ENCODE measurements at regions of chr7 and their contacts with region 1.

Region 1: DNA sequence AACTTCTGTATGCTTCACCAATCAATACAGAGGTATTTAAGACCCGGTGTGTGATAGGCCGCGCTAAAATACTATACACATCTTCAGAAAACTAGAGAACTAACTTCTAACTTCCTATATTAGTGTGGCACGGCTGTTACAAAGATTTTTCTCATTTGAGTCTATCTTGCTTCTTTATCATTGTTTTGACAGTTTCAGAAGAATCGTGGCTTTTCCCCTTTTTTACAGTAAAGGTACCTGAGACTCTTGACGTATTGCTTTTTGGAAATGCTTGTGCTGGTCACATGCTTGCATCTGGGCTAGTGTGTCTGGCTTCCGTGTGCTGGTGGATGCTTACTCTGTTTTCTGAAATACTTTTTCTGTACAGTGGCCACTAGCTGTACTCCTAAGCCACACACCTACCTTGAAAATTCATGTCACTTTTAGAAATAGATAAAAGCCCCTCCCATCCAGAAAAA is 12.7 kb downstream of the IKZF1 start:
- DNase-seq: peak; percentile 77
- H3K4me3 Mint-ChIP-seq: peak overlapping the region; percentile 71
- H3K27ac Mint-ChIP-seq: peak overlapping the region; percentile 99
- H3K4me1 Mint-ChIP-seq: peaks cover 90% of the 10 kb centered on the region
- H3K27me3 Mint-ChIP-seq: no peaks in the 10 kb centered on the region

Region 2: DNA sequence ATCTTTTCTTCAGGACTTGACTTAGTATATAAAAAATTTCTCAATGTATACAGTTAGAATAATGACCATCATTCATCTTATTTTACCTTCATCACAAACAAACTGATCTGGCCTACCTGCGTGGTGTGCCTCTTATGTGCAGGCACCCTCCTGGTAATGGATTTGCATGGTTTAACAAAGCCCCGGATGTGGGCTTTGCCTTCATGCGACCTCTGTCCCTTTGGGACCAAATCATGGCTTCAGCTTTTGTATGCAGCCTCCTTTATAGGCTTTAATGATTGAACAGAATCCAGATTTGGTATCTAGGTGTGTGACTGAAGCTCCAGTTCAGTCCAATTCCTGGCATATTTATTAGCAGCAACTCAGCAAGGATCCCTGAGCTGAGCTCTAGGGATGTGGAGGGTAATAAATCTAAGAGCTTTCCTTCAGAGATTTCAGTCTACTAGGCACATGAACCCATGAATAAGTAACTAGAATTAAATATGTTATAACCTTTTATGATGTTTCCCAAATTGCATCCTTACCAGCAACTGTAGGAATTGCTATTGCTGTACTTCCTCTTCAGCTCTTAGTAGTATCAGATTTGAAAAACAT is 1889.1 kb before region 1 on chr7:
- CTCF ChIA-PET with region 1: no interaction called
- intact Hi-C with region 1: no loop called
- DNase-seq: no peak
- H3K4me3 Mint-ChIP-seq: no peak overlapping the region
- H3K27ac Mint-ChIP-seq: no peak overlapping the region
- H3K4me1 Mint-ChIP-seq: no peaks in the 10 kb centered on the region
- H3K27me3 Mint-ChIP-seq: no peaks in the 10 kb centered on the region

Region 3: GRCh38 chr7:50147951-50148808 is 169.1 kb before region 1 on chr7:
- CTCF ChIA-PET with region 1: interaction called, 5 read pairs
- intact Hi-C with region 1: loop called (anchors 1 kb)
- DNase-seq: peak; percentile 73
- H3K4me3 Mint-ChIP-seq: peak overlapping the region; percentile 34
- H3K27ac Mint-ChIP-seq: peak overlapping the region; percentile 91
- H3K4me1 Mint-ChIP-seq: peaks cover 91% of the 10 kb centered on the region
- H3K27me3 Mint-ChIP-seq: no peaks in the 10 kb centered on the region

Region 4: DNA sequence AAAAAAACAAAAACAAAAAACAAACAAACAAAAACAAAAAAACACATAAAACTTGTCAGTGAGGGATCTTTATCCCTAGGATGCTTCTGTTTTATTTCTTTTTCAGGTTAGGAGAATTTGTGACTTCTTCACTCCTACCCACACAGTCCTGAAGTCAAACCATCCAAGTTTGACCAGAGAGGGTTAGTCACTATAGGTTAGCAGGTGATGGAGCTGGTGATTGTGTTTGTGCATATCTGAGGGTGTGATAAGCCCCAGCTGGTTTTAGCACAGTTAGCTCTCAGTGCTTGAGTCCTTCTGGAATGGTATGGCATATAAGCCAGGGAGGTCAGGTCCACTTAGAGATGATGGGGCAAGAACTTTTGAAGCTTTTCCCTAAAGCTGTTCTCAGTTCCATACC is 24.5 kb before region 1 on chr7:
- CTCF ChIA-PET with region 1: interaction called, 3 read pairs
- intact Hi-C with region 1: loop called (anchors 1 kb)
- DNase-seq: no peak
- H3K4me3 Mint-ChIP-seq: no peak overlapping the region
- H3K27ac Mint-ChIP-seq: peak overlapping the region; percentile 5
- H3K4me1 Mint-ChIP-seq: peaks cover 52% of the 10 kb centered on the region
- H3K27me3 Mint-ChIP-seq: no peaks in the 10 kb centered on the region

Region 5: GRCh38 chr7:50304158-50304910 is 12.9 kb before region 1 on chr7 and contains the start of gene IKZF1:
- CTCF ChIA-PET with region 1: interaction called, 20 read pairs
- intact Hi-C with region 1: loop called (anchors 1 kb)
- DNase-seq: peak; percentile 74
- H3K4me3 Mint-ChIP-seq: peak within 1 kb of the TSS; percentile 95
- H3K27ac Mint-ChIP-seq: peak within 1 kb of the TSS; percentile 99
- H3K4me1 Mint-ChIP-seq: peaks cover 34% of the 10 kb centered on the region
- H3K27me3 Mint-ChIP-seq: no peaks in the 10 kb centered on the region
- total RNA-seq, gene IKZF1: 213 to 226 TPM

Region 6: GRCh38 chr7:50335795-50336754 is 18.8 kb after region 1 on chr7:
- CTCF ChIA-PET with region 1: interaction called, 8 read pairs
- intact Hi-C with region 1: loop called (anchors 1 kb)
- DNase-seq: peak; percentile 91
- H3K4me3 Mint-ChIP-seq: no peak overlapping the region
- H3K27ac Mint-ChIP-seq: no peak overlapping the region
- H3K4me1 Mint-ChIP-seq: peaks cover 2% of the 10 kb centered on the region
- H3K27me3 Mint-ChIP-seq: no peaks in the 10 kb centered on the region

Region 7: DNA sequence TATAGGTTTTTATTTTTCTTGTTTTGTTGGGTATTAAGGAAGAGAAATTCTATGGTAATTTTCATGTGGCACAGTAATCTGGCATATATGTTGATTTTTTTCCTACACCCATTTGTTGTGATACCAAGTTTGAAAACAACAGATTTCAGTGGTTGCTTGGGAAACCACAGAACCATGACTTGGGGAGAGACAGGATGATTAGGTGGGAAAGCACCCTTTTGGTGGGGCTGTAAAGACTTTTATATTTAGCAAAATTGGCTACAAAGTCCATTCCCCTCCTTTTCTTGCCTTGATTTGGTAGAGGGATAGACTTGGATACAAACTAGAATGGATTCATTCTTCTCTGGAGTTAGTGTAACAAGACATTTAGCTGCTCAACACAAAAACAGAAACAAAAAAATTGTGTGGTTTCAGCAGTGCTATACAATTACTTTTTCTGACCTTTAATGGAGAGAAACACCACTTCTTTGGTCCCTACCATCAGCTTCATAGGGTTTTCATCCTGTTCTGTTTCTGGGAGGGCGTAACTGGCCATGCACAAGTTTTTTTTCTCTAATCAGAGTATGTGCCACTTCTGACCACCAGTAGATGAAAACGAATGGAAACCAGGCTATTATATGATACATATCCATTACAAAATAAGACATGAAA is 80.2 kb after region 1 on chr7:
- CTCF ChIA-PET with region 1: interaction called, 3 read pairs
- intact Hi-C with region 1: loop called (anchors 2 kb)
- DNase-seq: peak; percentile 60
- H3K4me3 Mint-ChIP-seq: no peak overlapping the region
- H3K27ac Mint-ChIP-seq: peak overlapping the region; percentile 78
- H3K4me1 Mint-ChIP-seq: peaks cover 81% of the 10 kb centered on the region
- H3K27me3 Mint-ChIP-seq: no peaks in the 10 kb centered on the region

Measured in activated naive CD4-positive, alpha-beta T cell treated with anti-CD3 and anti-CD28 coated beads for 36 hours (primary cell).